ENCODE measurements at regions of chr2 and their contacts with region 1.

Region 1: GRCh38 chr2:42095923-42096408 is 48.1 kb downstream of the PKDCC start:
- DNase-seq: peak; percentile 48
- ATAC-seq: peak; percentile 84
- H3K4me3 ChIP-seq: no peak overlapping the region
- H3K27ac ChIP-seq: no peak overlapping the region
- H3K4me1 ChIP-seq: no peaks in the 10 kb centered on the region
- H3K27me3 ChIP-seq: peaks cover 19% of the 10 kb centered on the region; the same call in 1 of the 2 replicates
- CTCF ChIP-seq: peak; percentile 71 to 96 (median 87)
- POLR2A ChIP-seq: no peak
- RAD21 ChIP-seq: peak; percentile 94

Region 2: DNA sequence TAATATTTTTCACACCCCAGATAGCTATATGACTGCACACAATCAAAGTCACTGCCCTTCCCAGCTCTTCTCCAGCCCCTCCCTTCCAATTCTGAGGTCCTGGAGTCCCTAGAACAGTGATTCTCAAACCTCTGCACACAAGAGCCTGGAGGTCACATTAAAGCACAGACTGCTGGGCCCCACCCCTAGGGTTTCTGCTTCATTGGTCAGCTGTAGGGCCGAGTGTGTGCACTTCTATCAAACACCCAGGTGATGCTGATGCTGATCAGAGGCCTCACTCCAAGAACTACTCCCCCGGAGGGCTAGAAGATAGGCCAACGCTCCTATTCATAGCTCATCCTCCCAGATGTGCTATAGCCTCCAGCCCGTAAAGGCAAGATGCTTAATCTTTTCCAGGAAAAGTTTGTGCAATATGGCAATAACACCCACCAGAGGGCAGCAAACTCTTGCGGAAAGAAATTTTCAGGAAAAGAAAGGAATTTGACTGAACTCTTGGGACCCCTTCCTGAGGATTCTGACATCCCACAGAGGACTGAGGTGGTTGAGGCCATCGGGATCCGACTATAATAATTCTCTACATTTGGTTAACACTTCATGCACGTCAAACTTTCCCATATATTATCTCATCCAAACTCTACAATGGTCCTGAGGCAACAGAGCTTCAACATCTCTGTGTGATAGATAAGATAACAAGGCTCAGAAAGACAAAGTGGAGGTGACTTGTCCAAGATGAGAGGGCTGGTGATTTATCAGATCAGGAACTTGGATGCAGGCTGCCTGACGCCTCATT is 242.3 kb before region 1 on chr2:
- CTCF ChIA-PET with region 1: interaction called, 117 read pairs
- POLR2A ChIA-PET with region 1: no interaction called
- RAD21 ChIA-PET with region 1: interaction called in 1 of 2 experiments, 3 read pairs
- intact Hi-C with region 1: no loop called
- DNase-seq: peak; percentile 35
- ATAC-seq: peak; percentile 82
- H3K4me3 ChIP-seq: no peak overlapping the region
- H3K27ac ChIP-seq: no peak overlapping the region
- H3K4me1 ChIP-seq: no peaks in the 10 kb centered on the region
- H3K27me3 ChIP-seq: peaks cover 12% of the 10 kb centered on the region
- CTCF ChIP-seq: peak; percentile 67 to 91 (median 80)
- POLR2A ChIP-seq: no peak
- RAD21 ChIP-seq: peak; percentile 94

Region 3: DNA sequence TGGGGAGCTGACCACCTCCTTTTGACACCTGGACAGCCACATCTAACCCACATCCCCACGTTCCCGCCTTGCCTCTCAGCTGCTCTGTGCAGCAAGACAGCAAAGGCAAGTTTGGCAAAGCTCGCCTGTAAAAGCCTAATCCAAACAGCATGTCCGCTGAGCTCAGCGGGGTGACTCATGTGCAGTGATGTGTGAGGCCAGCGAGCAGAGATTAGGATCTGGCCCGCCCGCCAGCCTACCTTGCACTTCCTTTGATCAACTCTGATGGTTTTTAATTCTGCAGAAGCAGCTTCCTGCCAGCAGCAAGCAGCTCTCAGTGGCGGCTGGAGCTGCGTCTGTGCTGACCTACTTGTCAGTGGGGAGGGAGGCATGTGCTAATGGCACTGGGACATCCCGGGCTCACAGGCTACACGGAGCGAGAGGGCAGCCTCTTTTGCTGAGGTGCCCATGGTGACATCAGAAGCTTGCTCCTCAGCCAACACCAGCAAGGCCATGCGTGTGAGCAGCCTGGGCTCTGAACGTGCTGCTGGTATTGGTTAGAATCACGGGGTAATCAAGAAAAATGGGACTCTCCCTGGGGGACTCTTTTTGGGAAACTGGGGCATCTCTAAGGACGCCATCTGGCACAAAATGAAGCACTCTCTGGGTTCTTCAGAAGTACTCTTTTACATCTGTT is 37.1 kb after region 1 on chr2:
- CTCF ChIA-PET with region 1: no interaction called
- POLR2A ChIA-PET with region 1: no interaction called
- RAD21 ChIA-PET with region 1: no interaction called
- intact Hi-C with region 1: no loop called
- DNase-seq: peak; percentile 61
- ATAC-seq: peak; percentile 89
- H3K4me3 ChIP-seq: peak overlapping the region; percentile 22 to 56
- H3K27ac ChIP-seq: no peak overlapping the region
- H3K4me1 ChIP-seq: peaks cover 19 to 27% of the 10 kb centered on the region in 2 experiments
- H3K27me3 ChIP-seq: no peaks in the 10 kb centered on the region; the same call in 1 of the 2 replicates
- CTCF ChIP-seq: no peak
- POLR2A ChIP-seq: no peak
- RAD21 ChIP-seq: no peak

Region 4: DNA sequence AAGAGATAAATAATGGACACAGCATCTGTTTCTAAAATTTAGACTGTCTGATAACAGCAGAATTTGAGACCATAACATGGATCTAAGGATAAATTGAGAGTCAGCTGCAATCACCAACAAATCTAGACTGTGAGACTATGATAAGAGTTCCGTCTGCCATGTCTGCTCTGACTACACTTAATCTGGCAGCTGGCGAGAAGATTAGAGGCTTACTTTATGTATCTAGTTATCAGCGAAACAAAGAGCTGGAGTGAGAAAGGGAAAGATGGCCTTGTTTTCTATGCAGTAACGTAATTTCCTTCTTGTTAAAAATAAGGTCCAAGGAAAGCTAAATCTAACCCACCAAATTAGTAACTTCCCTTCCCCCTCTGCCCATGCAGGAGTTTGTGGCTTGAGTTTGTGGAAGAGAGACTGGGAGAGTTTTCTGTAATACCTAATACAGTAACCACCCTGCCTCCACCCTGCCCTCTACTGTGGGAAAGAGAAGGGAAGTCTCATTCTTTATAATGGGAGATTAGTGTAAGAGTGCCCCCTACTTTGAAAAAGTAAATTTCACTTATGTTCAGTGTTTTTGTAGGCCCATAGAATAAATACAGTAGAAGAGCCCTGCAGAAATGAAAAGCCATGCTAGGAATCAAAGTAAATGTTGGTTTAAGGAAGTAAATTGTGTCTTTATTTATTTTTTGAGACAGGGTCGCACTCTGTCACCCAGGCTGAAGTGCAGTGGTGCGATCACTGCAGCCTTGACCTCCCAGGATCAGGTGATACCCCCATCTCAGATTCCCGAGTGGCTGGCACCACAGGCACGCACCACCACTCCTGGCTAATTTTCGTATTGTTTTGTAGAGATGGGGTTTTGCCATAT is 100.7 kb after region 1 on chr2:
- CTCF ChIA-PET with region 1: interaction called, 14 read pairs
- POLR2A ChIA-PET with region 1: no interaction called
- RAD21 ChIA-PET with region 1: no interaction called
- intact Hi-C with region 1: loop called (anchors 1 kb)
- DNase-seq: peak; percentile 22
- ATAC-seq: peak; percentile 91
- H3K4me3 ChIP-seq: no peak overlapping the region
- H3K27ac ChIP-seq: no peak overlapping the region
- H3K4me1 ChIP-seq: peaks cover 22 to 37% of the 10 kb centered on the region in 2 experiments
- H3K27me3 ChIP-seq: no peaks in the 10 kb centered on the region
- CTCF ChIP-seq: peak; percentile 50 to 98 (median 66)
- POLR2A ChIP-seq: no peak
- RAD21 ChIP-seq: peak; percentile 78

Region 5: DNA sequence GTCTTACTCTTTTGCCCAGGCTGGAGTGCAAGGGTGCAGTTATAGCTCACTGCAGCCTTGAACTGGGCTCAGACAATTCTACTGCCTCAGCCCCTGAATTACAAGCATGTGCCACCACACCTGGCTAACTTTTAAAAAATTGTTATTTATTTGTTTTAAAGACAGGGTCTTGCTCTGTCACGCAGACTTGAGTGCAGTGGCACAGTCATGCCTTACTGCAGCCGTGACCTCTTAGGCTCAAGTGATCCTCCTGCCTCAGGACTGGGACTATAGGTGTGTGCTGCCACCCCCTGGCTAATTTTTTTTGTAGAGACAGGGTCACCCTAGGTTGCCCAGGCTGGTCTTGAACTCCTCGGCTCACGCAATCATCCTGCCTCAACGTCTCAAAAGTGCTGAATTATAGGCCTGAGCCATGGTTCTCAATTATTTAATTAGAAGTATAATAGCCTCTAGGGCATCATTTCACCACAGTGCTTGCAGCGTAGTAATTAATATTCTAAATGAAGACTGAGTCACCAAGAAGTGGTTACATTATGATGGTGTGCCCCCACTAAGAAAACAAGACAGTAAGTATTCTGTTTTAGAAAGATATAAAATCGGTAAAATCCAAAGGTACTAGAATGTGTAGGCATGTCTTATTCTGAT is 142.8 kb after region 1 on chr2:
- CTCF ChIA-PET with region 1: interaction called, 8 read pairs
- POLR2A ChIA-PET with region 1: no interaction called
- RAD21 ChIA-PET with region 1: interaction called in 1 of 2 experiments, 4 read pairs
- intact Hi-C with region 1: loop called (anchors 1 kb)
- DNase-seq: peak; percentile 6
- ATAC-seq: peak; percentile 93
- H3K4me3 ChIP-seq: no peak overlapping the region
- H3K27ac ChIP-seq: no peak overlapping the region
- H3K4me1 ChIP-seq: no peaks in the 10 kb centered on the region
- H3K27me3 ChIP-seq: no peaks in the 10 kb centered on the region
- CTCF ChIP-seq: peak; percentile 32 to 53 (median 51); a peak in 5 of 6 replicates
- POLR2A ChIP-seq: no peak
- RAD21 ChIP-seq: peak; percentile 76

Region 6: GRCh38 chr2:42328148-42328833 is 232.3 kb after region 1 on chr2:
- CTCF ChIA-PET with region 1: interaction called, 54 read pairs
- POLR2A ChIA-PET with region 1: no interaction called
- RAD21 ChIA-PET with region 1: interaction called, 3 to 5 read pairs
- intact Hi-C with region 1: loop called (anchors 1 kb)
- DNase-seq: peak; percentile 7
- ATAC-seq: peak; percentile 65
- H3K4me3 ChIP-seq: no peak overlapping the region
- H3K27ac ChIP-seq: no peak overlapping the region
- H3K4me1 ChIP-seq: no peaks in the 10 kb centered on the region
- H3K27me3 ChIP-seq: no peaks in the 10 kb centered on the region
- CTCF ChIP-seq: peak; percentile 44 to 60 (median 60); a peak in 5 of 6 replicates
- POLR2A ChIP-seq: no peak
- RAD21 ChIP-seq: peak; percentile 63

Region 7: DNA sequence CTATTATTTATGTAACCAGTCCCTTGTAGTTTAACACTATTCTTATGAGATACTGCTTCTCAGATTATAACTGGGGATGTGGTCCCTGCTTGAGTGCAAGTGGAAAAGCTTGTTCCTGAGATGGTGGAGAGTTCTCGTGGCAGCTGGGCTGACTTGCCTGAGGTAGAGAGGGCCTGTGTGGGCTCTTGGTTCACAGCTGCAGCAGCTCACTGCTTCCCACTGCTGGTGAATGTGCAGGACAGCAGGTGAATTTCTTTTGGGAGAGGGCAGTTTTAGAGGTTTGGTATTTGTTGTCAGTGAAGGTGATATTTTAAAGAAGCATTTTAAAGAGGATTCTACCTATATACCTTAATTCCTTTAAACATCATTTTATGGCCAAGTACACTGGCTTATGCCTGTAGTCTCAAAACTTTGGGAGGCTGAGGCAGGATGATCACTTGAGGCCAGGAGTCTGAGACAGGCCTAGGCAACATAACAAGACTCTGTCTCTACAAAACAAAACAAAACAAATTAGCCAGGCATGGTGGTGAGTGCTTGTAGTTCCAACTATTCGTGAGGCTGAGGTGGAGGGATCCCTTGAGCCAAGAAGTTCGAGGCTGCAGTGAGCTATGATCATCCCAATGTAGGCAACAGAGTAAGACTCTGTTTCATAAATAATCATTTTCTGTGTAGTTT is 567.3 kb after region 1 on chr2:
- CTCF ChIA-PET with region 1: no interaction called
- POLR2A ChIA-PET with region 1: no interaction called
- RAD21 ChIA-PET with region 1: no interaction called
- intact Hi-C with region 1: loop called (anchors 1 kb)
- DNase-seq: peak; percentile 46
- ATAC-seq: peak; percentile 97
- H3K4me3 ChIP-seq: no peak overlapping the region
- H3K27ac ChIP-seq: no peak overlapping the region
- H3K4me1 ChIP-seq: no peaks in the 10 kb centered on the region
- H3K27me3 ChIP-seq: no peaks in the 10 kb centered on the region
- CTCF ChIP-seq: peak; percentile 90 to 99 (median 98)
- POLR2A ChIP-seq: no peak
- RAD21 ChIP-seq: peak; percentile 92